Calu3 (cell line): ENCODE measurements at regions of chr6 and their contacts with region 1.

Region 1: GRCh38 chr6:49531774-49532569 is 18.5 kb upstream of the C6orf141 start:
- DNase-seq: no peak
- H3K4me3 Mint-ChIP-seq: peak overlapping the region; percentile 44
- H3K27ac Mint-ChIP-seq: peak overlapping the region; percentile 73
- H3K4me1 Mint-ChIP-seq: peaks cover 14% of the 10 kb centered on the region
- H3K27me3 Mint-ChIP-seq: no peaks in the 10 kb centered on the region
- CTCF ChIP-seq: peak; percentile 47

Region 2: GRCh38 chr6:48978016-48978415 is 554.0 kb before region 1 on chr6:
- CTCF ChIA-PET with region 1: no interaction called
- intact Hi-C with region 1: no loop called
- DNase-seq: no peak
- H3K4me3 Mint-ChIP-seq: no peak overlapping the region
- H3K27ac Mint-ChIP-seq: no peak overlapping the region
- H3K4me1 Mint-ChIP-seq: no peaks in the 10 kb centered on the region
- H3K27me3 Mint-ChIP-seq: no peaks in the 10 kb centered on the region
- CTCF ChIP-seq: no peak

Region 3: GRCh38 chr6:49453221-49453620 is 78.8 kb before region 1 on chr6:
- CTCF ChIA-PET with region 1: interaction called, 3 read pairs
- intact Hi-C with region 1: loop called (anchors 1 kb)
- DNase-seq: no peak
- H3K4me3 Mint-ChIP-seq: no peak overlapping the region
- H3K27ac Mint-ChIP-seq: no peak overlapping the region
- H3K4me1 Mint-ChIP-seq: no peaks in the 10 kb centered on the region
- H3K27me3 Mint-ChIP-seq: no peaks in the 10 kb centered on the region
- CTCF ChIP-seq: peak; percentile 29

Region 4: GRCh38 chr6:49570474-49571079 is 38.6 kb after region 1 on chr6:
- CTCF ChIA-PET with region 1: interaction called, 13 read pairs
- intact Hi-C with region 1: loop called (anchors 1 kb)
- DNase-seq: no peak
- H3K4me3 Mint-ChIP-seq: no peak overlapping the region
- H3K27ac Mint-ChIP-seq: peak overlapping the region; percentile 51
- H3K4me1 Mint-ChIP-seq: peaks cover 40% of the 10 kb centered on the region
- H3K27me3 Mint-ChIP-seq: no peaks in the 10 kb centered on the region
- CTCF ChIP-seq: no peak

Region 5: GRCh38 chr6:49744259-49744658 is 212.3 kb after region 1 on chr6 and contains the start of gene CRISP3:
- CTCF ChIA-PET with region 1: no interaction called
- intact Hi-C with region 1: loop called (anchors 10 kb)
- DNase-seq: peak; percentile 2
- H3K4me3 Mint-ChIP-seq: no peak within 1 kb of the TSS
- H3K27ac Mint-ChIP-seq: no peak within 1 kb of the TSS
- H3K4me1 Mint-ChIP-seq: peaks cover 19% of the 10 kb centered on the region
- H3K27me3 Mint-ChIP-seq: no peaks in the 10 kb centered on the region
- CTCF ChIP-seq: no peak
- total RNA-seq, gene CRISP3: 1.5 and 7.0 TPM in 2 replicates

Region 6: DNA sequence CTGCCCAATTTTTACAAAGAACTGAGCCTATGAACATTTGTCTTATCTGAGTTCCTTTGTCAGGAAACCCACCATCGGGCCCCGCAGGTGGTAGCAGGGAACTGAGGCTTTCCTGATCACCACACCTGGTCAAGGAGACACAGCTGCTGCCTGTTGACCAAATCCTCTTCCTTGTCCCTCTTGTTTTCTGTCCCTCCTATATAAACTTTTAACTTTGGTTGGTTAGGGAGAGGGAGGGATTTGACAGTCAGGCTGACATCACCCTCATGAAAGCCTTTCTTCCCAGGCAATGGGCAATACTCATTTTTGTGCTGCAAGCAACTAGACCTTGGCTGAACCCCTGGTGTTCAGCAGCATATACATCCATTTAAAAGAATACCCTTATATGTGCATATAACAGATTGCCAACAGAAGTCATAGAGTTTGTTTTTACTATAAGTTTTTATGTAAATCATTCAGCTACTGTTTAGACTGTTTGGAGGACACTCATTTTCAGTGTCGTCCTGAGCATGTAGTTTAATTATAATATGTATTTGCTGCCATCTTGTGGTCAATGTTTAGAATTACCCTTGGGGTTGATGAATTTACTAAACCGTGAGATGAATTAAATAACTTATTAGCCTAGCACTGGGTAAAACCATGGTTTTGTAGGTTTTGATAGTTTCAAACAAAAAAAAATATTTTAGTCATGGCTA is 317.4 kb after region 1 on chr6:
- CTCF ChIA-PET with region 1: interaction called, 8 read pairs
- intact Hi-C with region 1: loop called (anchors 1 kb)
- DNase-seq: no peak
- H3K4me3 Mint-ChIP-seq: no peak overlapping the region
- H3K27ac Mint-ChIP-seq: no peak overlapping the region
- H3K4me1 Mint-ChIP-seq: no peaks in the 10 kb centered on the region
- H3K27me3 Mint-ChIP-seq: no peaks in the 10 kb centered on the region
- CTCF ChIP-seq: peak; percentile 50

Region 7: GRCh38 chr6:50007821-50008220 is 475.8 kb after region 1 on chr6:
- CTCF ChIA-PET with region 1: no interaction called
- intact Hi-C with region 1: no loop called
- DNase-seq: no peak
- H3K4me3 Mint-ChIP-seq: no peak overlapping the region
- H3K27ac Mint-ChIP-seq: peak overlapping the region; percentile 55
- H3K4me1 Mint-ChIP-seq: peaks cover 13% of the 10 kb centered on the region
- H3K27me3 Mint-ChIP-seq: no peaks in the 10 kb centered on the region
- CTCF ChIP-seq: no peak